Calu3 (cell line): ENCODE measurements at regions of chr5 and their contacts with region 1.

Region 1: DNA sequence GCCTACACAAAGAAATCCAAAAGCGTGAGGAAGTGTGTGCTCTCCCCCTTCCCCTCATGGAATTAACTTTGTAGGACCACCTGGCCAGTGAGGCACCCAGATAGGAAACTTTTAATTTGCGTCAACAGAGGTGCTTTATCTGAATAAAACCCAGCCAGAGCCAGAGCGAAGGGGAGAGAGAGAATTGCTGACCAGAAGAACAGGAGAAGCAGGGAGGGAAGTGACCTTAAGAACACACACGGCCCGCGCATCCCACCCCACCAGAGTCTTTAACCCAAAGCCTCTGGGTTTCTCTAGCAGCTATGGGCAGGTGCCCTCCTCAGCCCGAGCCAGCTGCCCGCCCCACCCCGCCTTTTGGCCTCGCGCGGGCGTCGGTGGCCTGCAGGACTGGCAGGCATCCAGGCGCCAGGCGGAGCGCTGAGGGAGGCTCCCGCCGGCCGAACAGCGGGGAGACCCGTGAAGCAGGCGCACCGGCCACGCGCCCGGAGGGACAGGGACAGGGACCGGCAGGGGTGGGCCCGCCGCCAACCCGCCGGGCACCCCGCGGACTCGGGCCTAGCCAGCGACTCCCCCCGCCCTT is 580 bp downstream of the ERAP1 start:
- DNase-seq: peak; percentile 86
- H3K4me3 Mint-ChIP-seq: peak overlapping the region; percentile 95
- H3K27ac Mint-ChIP-seq: peak overlapping the region; percentile 99
- H3K4me1 Mint-ChIP-seq: peaks cover 10% of the 10 kb centered on the region
- H3K27me3 Mint-ChIP-seq: no peaks in the 10 kb centered on the region
- CTCF ChIP-seq: no peak

Region 2: GRCh38 chr5:96790961-96791504 is 16.1 kb before region 1 on chr5:
- CTCF ChIA-PET with region 1: no interaction called
- intact Hi-C with region 1: no loop called
- DNase-seq: no peak
- H3K4me3 Mint-ChIP-seq: no peak overlapping the region
- H3K27ac Mint-ChIP-seq: peak overlapping the region; percentile 42
- H3K4me1 Mint-ChIP-seq: peaks cover 9% of the 10 kb centered on the region
- H3K27me3 Mint-ChIP-seq: no peaks in the 10 kb centered on the region
- CTCF ChIP-seq: no peak

Region 3: DNA sequence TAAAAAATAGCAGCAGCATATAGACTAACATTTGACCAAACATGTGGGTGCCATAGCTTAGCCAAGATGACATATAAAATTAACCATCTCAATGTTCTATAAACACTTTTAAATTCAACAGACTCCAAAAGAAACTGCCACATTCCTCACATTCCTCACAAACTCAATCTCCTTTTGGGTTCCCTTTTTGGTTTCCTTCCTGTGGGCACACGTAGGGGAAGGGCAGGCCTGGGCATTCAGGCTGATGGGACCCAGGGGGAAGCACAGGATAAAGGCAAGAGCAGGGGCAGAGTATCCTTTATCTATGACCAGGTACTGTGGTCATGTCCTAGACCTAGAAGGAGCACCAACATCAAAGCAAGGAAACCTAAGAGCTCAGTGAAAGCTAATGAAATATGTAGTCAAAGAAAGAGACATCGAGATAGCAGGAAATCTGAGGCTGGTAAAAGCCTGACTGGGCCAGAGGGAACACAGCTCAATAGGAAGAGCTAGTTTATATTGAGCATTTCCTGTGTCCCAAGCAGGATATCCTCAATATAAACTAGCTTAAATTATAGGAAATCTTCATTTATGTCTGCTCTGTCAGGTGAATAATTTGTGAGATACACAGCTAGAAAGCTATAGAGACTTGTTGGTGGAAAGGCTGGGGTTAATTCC is 14.2 kb after region 1 on chr5:
- CTCF ChIA-PET with region 1: interaction called, 11 read pairs
- intact Hi-C with region 1: no loop called
- DNase-seq: no peak
- H3K4me3 Mint-ChIP-seq: no peak overlapping the region
- H3K27ac Mint-ChIP-seq: no peak overlapping the region
- H3K4me1 Mint-ChIP-seq: peaks cover 15% of the 10 kb centered on the region
- H3K27me3 Mint-ChIP-seq: no peaks in the 10 kb centered on the region
- CTCF ChIP-seq: no peak

Region 4: DNA sequence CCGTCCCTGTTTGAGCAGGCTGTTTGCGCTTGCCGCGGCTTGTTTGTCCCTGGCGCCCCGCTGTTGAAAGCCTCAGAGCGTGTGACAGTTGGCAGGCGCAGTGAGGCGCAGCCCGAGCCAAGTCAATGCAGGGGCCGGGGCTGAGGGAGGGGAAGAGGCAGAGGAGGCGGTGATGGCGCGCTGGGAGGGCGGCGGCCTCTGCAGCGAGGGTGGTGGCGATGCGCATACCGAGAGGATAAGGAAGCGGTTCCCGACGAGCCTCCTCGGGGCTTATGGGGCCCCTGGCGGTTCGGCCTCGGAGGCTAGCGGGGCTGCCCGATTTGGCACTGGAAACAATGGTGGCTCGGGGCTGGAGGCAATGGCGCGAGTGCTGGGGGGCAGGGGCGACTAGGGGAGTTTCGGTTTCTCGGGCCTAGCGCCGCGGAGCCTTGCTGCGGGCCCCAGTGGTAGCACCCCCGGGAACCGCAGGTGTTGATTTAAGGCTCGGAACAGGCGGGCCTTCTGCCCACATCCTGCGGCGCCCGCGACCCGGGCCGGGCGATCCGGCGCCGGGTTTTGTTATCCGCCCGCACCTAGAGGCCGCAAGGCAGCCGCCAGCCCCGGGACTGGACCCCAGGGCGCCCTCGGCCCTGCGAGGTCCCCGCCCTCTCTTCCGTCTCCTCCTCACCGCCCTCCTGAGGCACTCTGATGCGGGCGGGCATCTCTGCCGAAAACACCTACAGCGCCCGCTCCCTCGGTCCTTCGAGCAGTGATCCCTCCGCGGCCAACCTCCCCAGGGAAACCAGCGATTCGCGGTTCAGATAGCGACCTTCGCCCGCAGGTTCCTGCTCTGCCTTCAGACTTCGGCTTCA is 127.8 kb after region 1 on chr5:
- CTCF ChIA-PET with region 1: no interaction called
- intact Hi-C with region 1: loop called (anchors 5 kb)
- DNase-seq: peak; percentile 98
- H3K4me3 Mint-ChIP-seq: peak overlapping the region; percentile 78
- H3K27ac Mint-ChIP-seq: peak overlapping the region; percentile 93
- H3K4me1 Mint-ChIP-seq: peaks cover 42% of the 10 kb centered on the region
- H3K27me3 Mint-ChIP-seq: no peaks in the 10 kb centered on the region
- CTCF ChIP-seq: no peak

Region 5: GRCh38 chr5:97094579-97095317 is 287.6 kb after region 1 on chr5:
- CTCF ChIA-PET with region 1: interaction called, 10 read pairs
- intact Hi-C with region 1: no loop called
- DNase-seq: no peak
- H3K4me3 Mint-ChIP-seq: no peak overlapping the region
- H3K27ac Mint-ChIP-seq: no peak overlapping the region
- H3K4me1 Mint-ChIP-seq: no peaks in the 10 kb centered on the region
- H3K27me3 Mint-ChIP-seq: no peaks in the 10 kb centered on the region
- CTCF ChIP-seq: no peak